ENCODE measurements at regions of chr10 and their contacts with region 1.

Region 1: GRCh38 chr10:102743588-102744373 is at the start of gene WBP1L:
- DNase-seq: peak; percentile 99
- H3K4me3 ChIP-seq: peak within 1 kb of the TSS; percentile 78 to 89 (median 84)
- H3K27ac ChIP-seq: peak within 1 kb of the TSS; percentile 88 to 92 (median 90)
- H3K4me1 ChIP-seq: peaks cover 19 to 39% (median 33%) of the 10 kb centered on the region in 4 donors
- H3K27me3 ChIP-seq: no peaks in the 10 kb centered on the region
- CTCF ChIP-seq: no peak
- EP300 ChIP-seq: no peak
- POLR2A ChIP-seq: peak; percentile 89
- total RNA-seq, gene WBP1L: 88.5 to 147 (median 112) TPM

Region 2: DNA sequence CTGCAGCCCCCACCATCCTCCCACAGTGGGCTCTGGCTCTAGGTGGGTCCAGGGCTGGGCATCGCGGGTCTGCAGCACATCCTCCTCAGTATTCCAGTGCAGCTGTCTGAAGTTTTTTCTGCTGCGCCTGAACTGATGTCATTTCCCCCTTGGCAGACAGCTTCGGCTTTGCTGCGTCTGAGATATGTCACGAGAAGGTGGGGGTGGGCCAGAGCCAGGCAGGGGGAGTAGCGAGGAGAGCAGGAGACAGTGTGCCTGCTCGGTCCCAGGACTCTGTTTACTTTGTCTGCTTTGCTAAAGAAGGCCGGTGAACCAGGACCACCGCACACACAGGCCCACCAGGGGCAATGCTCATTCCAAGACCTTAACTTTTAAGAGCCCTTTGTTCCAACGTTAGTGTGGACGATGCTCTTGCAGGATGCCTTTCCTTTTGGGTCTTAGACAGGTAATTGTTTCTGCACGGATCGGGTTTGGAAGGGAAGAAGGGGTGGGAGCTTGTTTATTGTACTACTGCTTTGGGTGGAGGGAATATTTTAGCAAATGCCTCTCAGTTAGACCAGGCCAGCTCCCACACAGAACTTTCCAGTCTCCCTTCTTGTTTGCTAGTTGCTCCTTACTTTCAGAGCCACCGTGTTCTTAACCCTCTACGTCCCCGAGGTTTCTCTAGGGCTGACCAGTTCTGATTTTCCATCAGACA is 32.3 kb after region 1 on chr10:
- intact Hi-C with region 1: loop called (anchors 2 kb)
- DNase-seq: peak; percentile 96
- H3K4me3 ChIP-seq: peak overlapping the region; percentile 42 to 56 (median 52)
- H3K27ac ChIP-seq: peak overlapping the region; percentile 89 to 94 (median 92)
- H3K4me1 ChIP-seq: peaks cover 84 to 100% (median 100%) of the 10 kb centered on the region in 4 donors
- H3K27me3 ChIP-seq: no peaks in the 10 kb centered on the region
- CTCF ChIP-seq: no peak
- EP300 ChIP-seq: peak; percentile 44
- POLR2A ChIP-seq: peak; percentile 75

Region 3: DNA sequence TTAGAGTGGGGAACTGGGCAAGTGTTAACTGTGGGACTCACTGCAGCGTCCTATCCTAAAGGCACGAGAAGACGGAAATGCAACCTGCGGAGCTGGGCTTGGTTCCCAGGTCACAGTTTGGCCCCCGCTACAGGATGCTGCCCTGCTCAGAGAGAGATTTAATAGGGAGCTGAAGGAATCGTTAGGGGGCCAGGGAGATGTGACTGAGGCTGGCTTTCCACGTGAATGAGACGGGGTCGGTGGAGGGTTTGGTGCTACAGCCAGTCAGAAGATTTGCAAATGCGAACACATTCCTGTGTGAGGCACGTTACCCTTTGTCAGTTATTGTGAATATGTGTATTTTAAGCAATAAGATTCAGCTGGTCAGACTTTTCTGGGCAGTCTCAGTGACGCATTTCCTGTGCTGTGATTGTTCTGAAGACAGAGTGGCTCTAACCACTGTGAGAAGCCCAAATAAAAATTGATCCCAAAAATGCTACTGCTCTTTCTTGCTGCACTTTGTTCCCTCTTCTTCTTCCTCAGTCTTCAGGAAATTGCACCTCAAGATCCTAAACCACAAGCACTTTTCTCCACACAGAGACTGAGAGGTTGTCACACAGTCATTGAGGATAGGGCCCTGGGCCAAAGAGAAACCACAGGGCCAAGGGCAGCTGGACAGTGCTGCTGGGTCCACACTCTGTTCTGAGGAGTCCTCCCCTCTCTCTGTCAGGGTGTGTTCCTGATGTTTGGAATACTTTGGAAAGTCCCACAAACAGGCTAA is 72.2 kb after region 1 on chr10:
- intact Hi-C with region 1: loop called (anchors 5 kb)
- DNase-seq: peak; percentile 93
- H3K4me3 ChIP-seq: peak overlapping the region in 1 of 4 donors; percentile 19
- H3K27ac ChIP-seq: peak overlapping the region; percentile 83 to 94 (median 89)
- H3K4me1 ChIP-seq: peaks cover 41 to 63% (median 43%) of the 10 kb centered on the region in 4 donors
- H3K27me3 ChIP-seq: no peaks in the 10 kb centered on the region
- CTCF ChIP-seq: no peak
- EP300 ChIP-seq: peak; percentile 18
- POLR2A ChIP-seq: no peak

Region 4: DNA sequence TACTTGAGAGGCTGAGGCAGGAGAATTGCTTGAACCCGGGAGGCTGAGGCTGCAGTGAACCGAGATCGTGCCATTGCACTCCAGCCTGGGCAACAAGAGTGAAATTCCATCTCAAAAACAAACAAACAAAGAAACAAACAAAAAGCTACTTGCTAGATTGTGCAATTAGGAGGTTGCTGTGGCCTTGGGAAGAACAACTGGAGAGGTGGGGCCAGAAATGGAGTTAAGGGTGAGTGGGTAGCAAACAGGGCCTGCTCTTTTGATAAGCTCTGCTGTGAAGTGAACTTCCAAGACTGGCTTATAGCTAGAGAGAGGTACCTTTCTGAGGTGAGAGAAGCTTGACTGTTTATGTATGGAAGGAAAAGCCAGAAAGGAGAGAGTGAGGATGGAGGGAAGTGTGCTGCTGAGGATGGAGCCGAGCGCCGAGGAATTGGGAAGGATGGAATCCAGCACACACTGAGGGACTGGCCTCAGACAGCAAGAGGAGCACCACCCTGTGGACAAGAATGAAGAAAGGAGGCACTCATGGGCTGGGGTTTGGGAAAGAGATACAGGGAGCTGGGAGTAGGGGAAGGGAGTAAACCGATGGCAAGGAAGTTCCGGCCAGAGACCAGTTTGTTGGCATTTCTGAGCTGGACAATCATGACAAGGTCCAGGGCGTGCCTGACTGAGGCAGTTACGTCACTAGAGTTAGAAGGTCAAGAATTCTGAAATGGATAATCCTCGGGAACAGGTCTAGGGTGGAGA is 494.9 kb after region 1 on chr10:
- intact Hi-C with region 1: loop called (anchors 10 kb)
- DNase-seq: no peak
- H3K4me3 ChIP-seq: no peak overlapping the region
- H3K27ac ChIP-seq: no peak overlapping the region
- H3K4me1 ChIP-seq: peaks cover 11 to 13% (median 12%) of the 10 kb centered on the region in 4 donors
- H3K27me3 ChIP-seq: no peaks in the 10 kb centered on the region
- CTCF ChIP-seq: peak in 2 of 3 experiments; percentile 12 to 32
- EP300 ChIP-seq: no peak
- POLR2A ChIP-seq: no peak